Uterus (tissue), 4 donors: ENCODE measurements at regions of chr12 and their contacts with region 1.

Region 1: DNA sequence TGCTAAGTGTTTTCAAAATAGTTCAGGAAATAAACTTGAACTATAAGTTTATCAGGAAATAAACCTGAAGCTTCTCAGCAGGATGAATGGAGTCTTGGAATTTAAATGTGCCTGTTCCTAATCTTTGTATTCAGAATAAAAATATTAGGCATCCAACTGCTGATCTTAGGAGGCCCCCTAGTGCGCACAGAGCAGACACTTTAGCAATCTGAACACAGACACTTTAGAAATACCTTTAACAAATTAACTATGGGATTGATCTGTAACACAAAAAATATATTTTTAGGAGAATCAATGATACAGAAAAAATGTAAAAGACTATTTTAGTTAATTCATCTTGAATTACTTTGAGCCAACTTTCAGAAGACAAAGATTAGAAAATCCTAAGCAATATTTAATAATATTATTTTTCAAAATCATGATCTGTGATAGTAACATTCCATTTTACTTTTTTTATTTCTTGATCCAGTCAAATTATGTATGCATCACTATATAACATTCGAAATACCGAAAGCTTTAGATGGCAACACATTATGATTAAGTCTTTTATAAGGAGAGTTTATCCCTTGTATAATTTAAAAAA is 80.9 kb downstream of the SLC41A2 start:
- DNase-seq: peak; percentile 47 to 48
- H3K4me3 ChIP-seq: no peak overlapping the region
- H3K27ac ChIP-seq: no peak overlapping the region
- H3K4me1 ChIP-seq: no peaks in the 10 kb centered on the region
- H3K27me3 ChIP-seq: no peaks in the 10 kb centered on the region
- CTCF ChIP-seq: peak; percentile 76 to 91 (median 80)
- POLR2A ChIP-seq: no peak

Region 2: GRCh38 chr12:104381731-104382480 is 495.3 kb before region 1 on chr12:
- intact Hi-C with region 1: loop called (anchors 2 kb)
- DNase-seq: peak; percentile 79 to 82
- H3K4me3 ChIP-seq: no peak overlapping the region
- H3K27ac ChIP-seq: no peak overlapping the region
- H3K4me1 ChIP-seq: peaks cover 0 to 3% of the 10 kb centered on the region in 2 donors
- H3K27me3 ChIP-seq: no peaks in the 10 kb centered on the region
- CTCF ChIP-seq: peak; percentile 92 to 96 (median 94)
- POLR2A ChIP-seq: no peak

Region 3: GRCh38 chr12:104805186-104805585 is 72.0 kb before region 1 on chr12:
- intact Hi-C with region 1: no loop called
- DNase-seq: no peak
- H3K4me3 ChIP-seq: no peak overlapping the region
- H3K27ac ChIP-seq: no peak overlapping the region
- H3K4me1 ChIP-seq: no peaks in the 10 kb centered on the region
- H3K27me3 ChIP-seq: no peaks in the 10 kb centered on the region
- CTCF ChIP-seq: no peak
- POLR2A ChIP-seq: no peak